ENCODE measurements at regions of chr15 and their contacts with region 1.

Region 1: GRCh38 chr15:44711356-44712107 is at the start of gene B2M:
- DNase-seq: peak; percentile 93
- CTCF ChIP-seq: no peak

Region 2: DNA sequence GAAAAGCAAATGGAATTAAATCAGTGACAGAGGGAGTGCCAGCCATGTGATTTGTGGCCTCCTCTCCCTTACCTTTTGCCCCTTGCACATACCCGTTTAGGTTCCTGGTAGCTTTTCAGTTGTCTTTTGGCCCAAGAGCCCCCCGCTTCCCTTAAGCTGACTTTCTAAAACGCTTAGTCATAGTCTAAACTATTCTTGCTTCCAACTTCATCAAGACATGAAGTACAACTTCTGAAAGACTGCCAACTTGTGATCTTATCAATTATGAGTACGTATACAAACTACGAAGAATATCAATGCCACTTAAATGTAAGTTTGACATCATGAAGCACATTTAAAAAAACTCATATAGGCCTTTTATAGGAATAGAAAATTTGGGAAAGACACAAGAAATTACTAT is 112.6 kb before region 1 on chr15:
- in situ Hi-C with region 1: no loop called
- DNase-seq: no peak
- CTCF ChIP-seq: no peak

Region 3: DNA sequence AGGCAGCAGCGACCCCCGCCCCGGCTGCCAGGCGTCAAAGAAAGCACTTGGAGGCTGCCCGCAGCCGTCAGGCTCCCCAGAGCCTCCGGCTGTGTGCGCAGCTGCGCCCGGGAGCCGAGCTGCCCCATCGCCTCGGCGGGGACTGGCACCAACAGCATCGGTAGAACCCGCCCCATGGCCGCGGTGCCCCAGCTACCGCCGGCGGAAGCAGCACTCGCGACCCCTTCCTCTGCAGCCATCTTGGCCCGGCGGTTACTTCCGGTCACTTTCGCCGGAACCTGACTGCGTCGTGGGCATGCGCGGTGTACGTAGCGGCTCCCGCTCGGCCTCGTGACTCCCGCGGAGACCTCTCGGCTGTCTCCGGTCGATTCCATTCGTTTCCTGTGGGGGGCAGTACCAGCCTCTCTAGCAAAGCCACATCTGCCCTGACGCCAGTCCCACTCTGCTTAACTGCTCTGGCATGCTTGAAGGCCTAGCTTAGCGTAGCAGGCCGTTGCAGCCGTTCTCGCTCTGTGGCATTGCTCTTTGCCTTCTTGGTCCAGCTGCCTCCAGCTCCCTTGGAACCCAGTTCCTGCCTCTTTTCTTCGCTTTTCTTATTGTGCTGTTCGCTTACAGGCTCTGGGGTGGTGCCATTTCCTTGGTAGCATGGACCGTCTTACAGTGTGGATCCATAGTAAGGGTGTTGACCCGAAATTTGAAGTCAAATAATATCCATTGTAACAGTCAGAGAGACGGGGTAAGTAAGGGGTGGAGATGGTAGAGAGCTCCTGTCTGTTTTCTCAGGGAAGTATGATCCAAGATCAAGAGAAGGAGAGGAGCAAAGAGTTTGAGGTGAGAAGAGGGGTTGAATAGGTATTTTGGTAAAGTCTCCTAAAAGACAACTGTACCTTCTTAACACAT is 47.9 kb before region 1 on chr15 and contains the start of gene SPG11:
- in situ Hi-C with region 1: loop called (anchors 5 kb)
- DNase-seq: peak; percentile 91
- CTCF ChIP-seq: peak; percentile 86